Endothelial cell of umbilical vein (primary cell): ENCODE measurements at regions of chr2 and their contacts with region 1.

Region 1: DNA sequence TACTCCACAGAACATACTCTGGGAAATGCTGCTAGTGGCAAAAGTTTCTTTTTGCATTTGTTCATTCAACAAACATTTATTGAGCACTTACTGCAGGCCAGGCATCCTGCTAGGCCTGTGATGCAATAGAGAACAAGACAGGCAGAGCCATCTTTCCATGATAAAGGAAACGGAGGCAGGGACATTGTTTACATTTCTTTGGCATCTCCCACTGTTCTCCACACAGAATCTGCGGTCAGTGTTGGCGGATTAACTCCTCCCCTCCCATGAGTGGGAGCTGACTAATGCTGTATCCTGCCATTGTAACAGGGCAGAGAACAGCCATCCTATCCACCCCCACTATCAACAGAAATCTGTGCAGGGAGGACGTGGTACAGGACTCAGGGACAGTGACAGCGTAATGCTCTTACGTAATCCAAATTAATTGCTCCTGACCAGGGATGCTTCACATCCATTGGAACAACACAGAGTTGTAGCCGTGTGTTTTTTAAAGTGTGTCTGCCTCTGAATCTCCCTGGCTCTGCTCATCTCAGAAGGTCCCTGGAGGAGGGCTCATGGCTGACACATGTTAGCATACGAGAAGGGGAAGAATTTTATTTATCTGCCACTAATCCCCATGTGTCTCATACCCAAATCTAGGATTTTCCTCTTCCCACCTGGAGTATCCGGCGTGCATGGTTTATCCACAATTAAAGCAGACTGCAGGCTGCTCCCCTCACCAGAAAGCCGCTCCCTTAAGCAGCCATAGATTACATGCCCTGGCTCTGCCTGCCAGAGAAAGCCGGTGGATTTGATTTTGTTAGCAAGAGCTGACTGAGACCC is 32.3 kb downstream of the STEAP3 start:
- DNase-seq: peak; percentile 92
- H3K4me3 ChIP-seq: no peak overlapping the region
- H3K27ac ChIP-seq: peak overlapping the region; percentile 68
- H3K4me1 ChIP-seq: peaks cover 36% of the 10 kb centered on the region
- H3K27me3 ChIP-seq: no peaks in the 10 kb centered on the region
- CTCF ChIP-seq: no peak
- POLR2A ChIP-seq: no peak

Region 2: DNA sequence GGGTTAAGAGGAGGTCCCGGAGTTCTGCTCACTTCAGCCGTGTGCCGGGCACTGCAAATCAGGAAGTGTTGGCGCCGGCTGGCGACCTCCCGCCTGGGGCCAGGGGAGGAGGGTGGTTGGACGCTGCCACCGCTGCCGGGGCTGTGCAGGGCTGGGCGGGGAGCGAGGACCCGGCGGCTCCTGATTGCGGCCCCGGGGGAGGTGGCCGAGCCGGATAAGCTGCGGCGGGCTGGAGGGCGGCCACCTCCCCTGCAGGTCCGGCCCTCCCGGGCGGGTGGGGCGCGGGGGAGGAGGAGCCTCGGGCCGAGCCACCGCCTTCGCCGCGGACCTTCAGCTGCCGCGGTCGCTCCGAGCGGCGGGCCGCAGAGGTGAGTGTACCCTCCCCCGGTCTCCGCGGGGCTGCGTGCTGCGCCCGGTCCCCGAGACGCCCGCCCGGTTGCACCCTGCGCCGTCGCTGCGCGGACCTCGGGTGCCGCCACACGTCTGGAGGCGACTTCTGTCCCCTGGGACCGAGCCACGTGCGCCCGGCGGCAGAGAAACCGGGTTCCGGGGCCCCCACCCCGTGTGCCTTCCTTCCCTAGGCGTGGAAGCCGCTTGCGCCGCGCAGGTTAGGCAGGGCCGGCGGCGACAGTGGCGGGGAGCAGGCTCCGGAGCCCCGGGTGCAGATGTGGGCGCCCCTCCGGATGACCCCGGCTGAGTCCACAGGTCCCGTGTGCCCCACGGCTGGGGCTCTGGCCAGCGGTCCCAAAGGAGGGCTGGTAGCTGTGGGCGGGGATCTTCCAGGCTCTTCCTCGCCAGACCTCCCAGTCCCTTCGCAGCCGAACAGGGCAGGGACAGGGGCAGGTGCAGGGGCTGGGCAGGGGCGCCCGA is 32.2 kb before region 1 on chr2 and contains the start of gene STEAP3:
- CTCF ChIA-PET with region 1: interaction called, 5 read pairs
- POLR2A ChIA-PET with region 1: no interaction called
- dilution Hi-C with region 1: no loop called
- intact Hi-C with region 1: loop called (anchors 2 kb)
- DNase-seq: peak; percentile 41
- H3K4me3 ChIP-seq: peak within 1 kb of the TSS; percentile 49 to 85 (median 63)
- H3K27ac ChIP-seq: no peak within 1 kb of the TSS
- H3K4me1 ChIP-seq: peaks cover 8% of the 10 kb centered on the region
- H3K27me3 ChIP-seq: no peaks in the 10 kb centered on the region
- CTCF ChIP-seq: no peak
- POLR2A ChIP-seq: peak; percentile 37
- total RNA-seq, gene STEAP3: 12.7 and 17.4 TPM in 2 replicates

Region 3: DNA sequence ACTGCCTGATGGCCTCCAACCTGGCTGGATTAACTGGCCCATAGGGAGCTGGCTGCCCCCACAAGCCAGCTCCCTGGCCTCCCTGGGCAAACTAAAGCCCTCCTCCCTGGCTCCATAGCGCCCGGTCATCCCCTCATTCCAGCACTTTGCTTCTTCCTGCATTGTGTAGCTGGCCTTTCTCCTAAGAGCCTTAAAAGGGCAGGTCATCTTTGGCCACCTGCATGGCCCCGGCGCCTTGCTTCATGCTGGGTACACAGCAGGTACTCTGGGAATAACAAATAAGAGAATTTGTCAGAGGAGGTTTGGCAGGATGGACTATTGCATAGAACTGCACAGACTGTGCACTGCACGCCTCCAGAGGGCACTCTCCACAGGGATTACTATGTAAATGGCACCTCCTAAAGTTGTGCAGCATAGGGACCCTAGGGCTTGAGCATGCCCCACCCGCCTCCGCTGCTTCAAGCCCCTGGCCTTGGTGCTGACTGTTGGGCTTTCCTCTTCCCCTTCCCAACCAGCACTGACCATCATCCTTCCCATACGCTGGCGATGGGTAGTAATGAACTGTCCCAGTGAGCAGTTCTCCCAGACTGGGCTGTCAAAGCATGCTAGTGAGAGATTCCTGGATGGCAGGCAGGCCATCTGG is 21.5 kb before region 1 on chr2:
- CTCF ChIA-PET with region 1: interaction called, 5 read pairs
- POLR2A ChIA-PET with region 1: no interaction called
- dilution Hi-C with region 1: no loop called
- intact Hi-C with region 1: loop called (anchors 2 kb)
- DNase-seq: peak; percentile 30
- H3K4me3 ChIP-seq: no peak overlapping the region
- H3K27ac ChIP-seq: no peak overlapping the region
- H3K4me1 ChIP-seq: no peaks in the 10 kb centered on the region
- H3K27me3 ChIP-seq: no peaks in the 10 kb centered on the region
- CTCF ChIP-seq: peak; percentile 43 to 58
- POLR2A ChIP-seq: no peak

Region 4: GRCh38 chr2:119366649-119367471 is 110.9 kb after region 1 on chr2 and contains the starts of genes C2orf76 and DBI:
- CTCF ChIA-PET with region 1: interaction called, 3 read pairs
- POLR2A ChIA-PET with region 1: no interaction called
- dilution Hi-C with region 1: no loop called
- intact Hi-C with region 1: loop called (anchors 10 kb)
- DNase-seq: peak; percentile 95
- H3K4me3 ChIP-seq: peak within 1 kb of the TSS; percentile 66 to 86 (median 73)
- H3K27ac ChIP-seq: peak within 1 kb of the TSS; percentile 63
- H3K4me1 ChIP-seq: peaks cover 21% of the 10 kb centered on the region
- H3K27me3 ChIP-seq: no peaks in the 10 kb centered on the region
- CTCF ChIP-seq: no peak
- POLR2A ChIP-seq: peak; percentile 89
- total RNA-seq, gene C2orf76: 12.0 and 12.1 TPM in 2 replicates
- total RNA-seq, gene DBI: 214 and 245 TPM in 2 replicates